Mammary epithelial cell (primary cell): ENCODE measurements at regions of chr6 and their contacts with region 1.

Region 1: DNA sequence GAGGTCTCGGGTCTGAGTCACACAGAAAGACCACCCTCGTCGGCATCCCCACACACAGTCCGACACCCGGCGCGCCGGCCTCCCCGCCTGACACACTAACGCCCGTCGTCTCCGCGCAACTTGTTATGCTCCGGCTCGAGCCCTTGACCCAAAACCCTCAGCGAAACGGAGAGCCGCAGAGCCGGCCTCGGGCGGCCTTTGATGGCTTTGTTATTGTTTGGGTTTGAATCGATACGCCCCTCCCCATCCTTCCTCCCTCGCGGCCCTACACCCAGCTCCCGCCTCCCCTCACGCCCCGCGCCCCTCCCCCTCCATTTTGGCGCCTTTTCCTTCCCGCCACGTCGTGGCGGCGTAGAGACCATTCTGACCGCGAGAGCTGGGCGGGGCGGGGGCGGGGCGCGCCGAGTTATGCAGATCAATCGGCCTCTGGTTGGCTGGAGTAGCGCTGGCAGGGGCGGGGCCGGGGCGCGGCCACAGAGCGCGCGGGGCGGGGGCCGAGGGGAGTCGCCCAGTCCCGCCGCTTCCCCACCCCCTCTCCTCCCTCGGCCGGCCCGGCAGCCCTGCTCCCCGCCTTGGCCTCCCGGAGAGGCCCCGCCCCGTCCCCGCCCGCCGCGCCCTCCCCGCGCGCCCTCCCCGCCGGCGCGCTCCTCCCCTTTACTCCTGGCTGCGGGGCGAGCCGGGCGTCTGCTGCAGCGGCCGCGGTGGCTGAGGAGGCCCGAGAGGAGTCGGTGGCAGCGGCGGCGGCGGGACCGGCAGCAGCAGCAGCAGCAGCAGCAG is at the start of gene PIM1:
- DNase-seq: peak; percentile 96
- H3K4me3 ChIP-seq: peak within 1 kb of the TSS; percentile 94 to 98 (median 98)
- H3K27ac ChIP-seq: peak within 1 kb of the TSS; percentile 87
- H3K4me1 ChIP-seq: peaks cover 22% of the 10 kb centered on the region
- H3K27me3 ChIP-seq: no peaks in the 10 kb centered on the region
- CTCF ChIP-seq: no peak
- total RNA-seq, gene PIM1: 4.7 to 29.6 TPM

Region 2: GRCh38 chr6:36765594-36766398 is 403.9 kb before region 1 on chr6:
- CTCF ChIA-PET with region 1: no interaction called
- dilution Hi-C with region 1: no loop called
- in situ Hi-C with region 1: no loop called
- intact Hi-C with region 1: loop called (anchors 10 kb)
- DNase-seq: peak; percentile 63
- H3K4me3 ChIP-seq: no peak overlapping the region
- H3K27ac ChIP-seq: no peak overlapping the region
- H3K4me1 ChIP-seq: peaks cover 21% of the 10 kb centered on the region
- H3K27me3 ChIP-seq: no peaks in the 10 kb centered on the region
- CTCF ChIP-seq: peak; percentile 94 to 98

Region 3: GRCh38 chr6:37029249-37029971 is 140.3 kb before region 1 on chr6:
- CTCF ChIA-PET with region 1: interaction called, 14 read pairs
- dilution Hi-C with region 1: no loop called
- in situ Hi-C with region 1: loop called (anchors 10 kb)
- intact Hi-C with region 1: loop called (anchors 1 kb)
- DNase-seq: peak; percentile 77
- H3K4me3 ChIP-seq: no peak overlapping the region
- H3K27ac ChIP-seq: no peak overlapping the region
- H3K4me1 ChIP-seq: peaks cover 26% of the 10 kb centered on the region
- H3K27me3 ChIP-seq: no peaks in the 10 kb centered on the region
- CTCF ChIP-seq: peak; percentile 28 to 60

Region 4: DNA sequence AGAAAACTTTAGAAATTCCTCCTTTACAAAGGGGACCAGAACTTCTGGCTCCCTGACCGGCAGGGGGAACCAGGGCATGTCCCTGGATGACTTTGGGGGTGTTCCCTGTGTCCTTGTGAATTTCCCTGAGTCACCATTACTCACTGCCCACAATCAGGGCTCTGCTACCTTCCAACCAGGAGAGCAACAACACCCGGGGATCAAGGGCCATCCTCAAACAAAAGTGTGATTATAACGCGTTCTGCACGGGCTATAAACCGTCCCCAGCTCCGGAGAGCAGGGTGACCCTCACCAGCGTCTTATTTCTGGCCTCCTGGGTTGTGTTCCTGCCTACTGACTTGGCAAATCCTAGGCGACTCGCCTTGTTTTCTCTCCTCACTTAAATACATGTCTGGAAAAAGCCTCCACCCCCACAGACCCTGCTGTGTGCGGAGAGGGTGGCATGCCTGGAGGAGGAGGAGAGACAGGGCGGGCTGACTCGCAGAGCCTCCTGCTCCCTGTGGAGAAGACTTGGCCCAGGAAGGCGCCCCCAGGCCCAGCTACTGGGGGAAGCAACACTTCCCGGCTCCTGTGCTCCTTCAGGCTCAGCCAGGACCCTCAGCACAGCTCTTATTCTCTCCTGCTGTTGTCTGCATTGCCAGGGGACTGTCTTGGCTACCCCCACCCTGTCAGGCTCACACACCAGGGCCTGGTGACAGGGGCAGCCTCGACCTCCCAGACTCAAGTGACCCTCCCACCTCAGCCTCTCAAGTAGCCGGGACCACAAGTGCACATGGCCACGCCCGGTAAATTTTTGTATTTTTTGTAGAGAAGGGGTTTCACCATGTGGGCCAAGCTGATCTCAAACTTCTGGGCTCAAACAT is 110.1 kb before region 1 on chr6:
- CTCF ChIA-PET with region 1: interaction called, 17 read pairs
- dilution Hi-C with region 1: no loop called
- in situ Hi-C with region 1: loop called (anchors 5 kb)
- intact Hi-C with region 1: loop called (anchors 1 kb)
- DNase-seq: peak; percentile 98
- H3K4me3 ChIP-seq: peak overlapping the region in 2 of 3 experiments; percentile 16 to 27
- H3K27ac ChIP-seq: peak overlapping the region; percentile 83
- H3K4me1 ChIP-seq: peaks cover 51% of the 10 kb centered on the region
- H3K27me3 ChIP-seq: no peaks in the 10 kb centered on the region
- CTCF ChIP-seq: peak; percentile 64 to 87

Region 5: DNA sequence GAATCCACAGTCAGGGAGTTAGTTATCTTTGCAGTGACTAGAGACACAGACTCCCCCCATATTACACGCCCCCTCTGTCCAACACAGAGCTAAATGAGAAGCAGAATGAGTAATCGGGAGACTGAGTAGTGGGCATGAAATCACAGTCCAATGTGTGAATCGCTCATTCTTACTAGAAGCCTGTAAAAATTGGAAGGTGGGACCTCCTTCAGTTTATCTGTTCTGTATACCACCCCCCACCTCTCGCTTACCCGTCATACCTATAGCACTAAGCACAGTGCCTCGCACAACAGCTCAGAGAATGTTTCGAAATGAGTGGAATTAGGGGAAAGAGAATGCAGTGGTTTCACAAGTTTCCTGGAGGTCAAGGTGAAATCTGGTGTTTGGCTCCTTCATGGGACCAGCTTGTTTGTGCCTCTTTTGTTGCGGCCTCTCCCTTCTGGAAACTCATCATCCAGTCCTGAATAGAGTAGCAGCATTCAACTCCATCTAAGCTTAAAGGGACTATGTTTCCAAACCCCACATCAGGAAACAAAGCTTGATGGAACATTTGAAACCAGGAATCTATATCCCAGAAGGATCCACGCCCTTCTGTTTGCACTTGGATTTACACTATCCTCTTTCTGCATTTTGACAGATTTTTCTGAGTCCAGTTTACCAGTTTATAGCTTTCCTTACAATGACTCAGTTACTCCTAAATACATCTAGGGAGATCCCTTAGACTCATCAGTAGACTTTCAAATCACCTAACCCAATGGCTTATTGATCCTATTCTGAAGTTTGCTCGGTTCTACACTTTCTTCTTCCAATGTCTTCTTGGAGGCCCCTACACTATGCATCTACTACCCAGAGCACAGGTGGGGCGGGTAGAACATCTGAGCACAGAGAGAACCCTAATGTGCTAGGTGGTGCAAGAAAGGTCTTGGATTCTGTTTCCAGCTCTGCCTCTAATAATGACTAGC is 58.9 kb before region 1 on chr6:
- CTCF ChIA-PET with region 1: no interaction called
- dilution Hi-C with region 1: no loop called
- in situ Hi-C with region 1: no loop called
- intact Hi-C with region 1: no loop called
- DNase-seq: no peak
- H3K4me3 ChIP-seq: no peak overlapping the region
- H3K27ac ChIP-seq: no peak overlapping the region
- H3K4me1 ChIP-seq: no peaks in the 10 kb centered on the region
- H3K27me3 ChIP-seq: no peaks in the 10 kb centered on the region
- CTCF ChIP-seq: no peak

Region 6: DNA sequence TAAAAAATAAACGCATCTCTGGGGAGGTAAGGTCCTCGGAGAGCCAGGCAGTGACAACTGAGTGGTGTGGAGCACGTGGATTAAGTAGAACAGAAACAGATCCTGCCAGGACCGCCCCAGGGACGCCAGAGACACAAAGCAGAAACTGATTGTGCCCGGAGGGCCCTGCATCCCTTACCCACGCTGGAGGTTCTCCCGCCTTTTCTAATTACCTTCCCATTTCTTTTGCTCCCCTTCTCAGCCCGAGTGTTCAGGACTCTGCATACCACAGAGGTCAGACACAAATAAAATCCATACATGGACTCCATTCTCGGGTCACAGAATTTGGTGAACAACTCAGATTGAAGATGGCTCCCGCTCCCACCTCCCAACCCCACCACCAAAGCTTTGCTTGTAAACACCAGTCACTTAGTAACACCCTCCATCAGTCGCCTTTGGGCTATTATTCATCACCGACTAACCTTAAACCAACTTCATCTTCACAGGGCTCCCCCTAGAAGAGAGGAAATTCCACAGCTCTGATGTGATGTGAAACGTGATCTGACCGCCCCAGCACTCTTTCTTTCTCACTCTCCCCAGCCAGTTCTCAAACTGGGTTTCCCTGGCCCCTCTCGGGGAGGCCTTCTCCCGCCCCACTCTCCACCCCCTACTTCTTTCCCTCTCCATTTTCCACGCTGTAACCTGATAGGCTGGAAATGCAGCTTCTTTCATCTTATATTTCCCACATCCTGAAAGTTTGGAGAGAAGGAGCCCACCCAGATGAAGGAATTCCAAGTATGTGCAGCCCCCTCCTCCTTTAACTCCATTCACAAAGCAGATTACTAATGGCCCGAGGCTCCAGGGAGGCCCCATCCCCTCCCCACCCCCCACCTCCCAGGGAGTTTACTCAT is 32.2 kb before region 1 on chr6:
- CTCF ChIA-PET with region 1: interaction called, 17 read pairs
- dilution Hi-C with region 1: no loop called
- in situ Hi-C with region 1: no loop called
- intact Hi-C with region 1: loop called (anchors 1 kb)
- DNase-seq: peak; percentile 96
- H3K4me3 ChIP-seq: no peak overlapping the region
- H3K27ac ChIP-seq: peak overlapping the region; percentile 86
- H3K4me1 ChIP-seq: peaks cover 44% of the 10 kb centered on the region
- H3K27me3 ChIP-seq: no peaks in the 10 kb centered on the region
- CTCF ChIP-seq: no peak